H1 (cell line): ENCODE measurements at regions of chr14 and their contacts with region 1.

Region 1: DNA sequence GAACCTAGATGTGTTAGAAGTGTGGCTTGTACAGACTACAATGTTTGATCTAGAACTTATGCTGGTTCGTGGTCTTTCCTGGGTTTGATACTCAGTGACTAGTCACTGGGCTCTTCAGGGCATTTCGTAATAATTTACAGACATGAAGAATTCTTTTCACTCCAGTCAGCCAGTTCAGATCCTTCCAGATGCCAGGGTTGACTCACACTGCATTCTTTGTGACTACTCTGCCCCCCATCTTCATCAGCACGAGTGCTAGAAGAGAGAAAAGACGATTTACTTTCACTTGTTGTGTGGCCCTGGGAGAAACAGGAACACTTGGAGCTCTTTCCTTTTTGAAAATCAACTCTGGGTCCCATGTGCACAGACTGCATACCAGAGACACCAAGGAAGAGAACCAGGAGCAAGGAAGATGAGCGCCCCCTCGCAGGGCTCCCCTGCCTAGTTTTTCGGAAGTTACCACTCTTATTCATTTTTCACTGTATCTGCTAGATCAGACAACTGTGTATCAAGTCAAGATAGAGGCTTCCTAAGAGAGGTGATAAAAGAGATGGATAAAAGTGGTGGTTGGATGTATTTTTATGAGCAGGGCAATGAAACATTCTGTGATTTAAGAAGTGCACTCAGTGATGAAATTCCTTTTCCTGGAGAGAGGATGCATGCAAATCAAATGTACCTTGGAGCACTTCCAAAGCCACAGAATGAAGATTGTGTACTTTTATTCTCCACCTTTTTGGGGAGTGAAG is 33.5 kb upstream of the EVL start:
- DNase-seq: no peak
- H3K4me3 ChIP-seq: no peak overlapping the region
- H3K27ac ChIP-seq: no peak overlapping the region
- H3K4me1 ChIP-seq: no peaks in the 10 kb centered on the region
- H3K27me3 ChIP-seq: peaks cover 0 to 2% (median 0%) of the 10 kb centered on the region in 4 experiments; a peak in 2 of 7 replicates
- CTCF ChIP-seq: no peak
- EP300 ChIP-seq: no peak
- POLR2A ChIP-seq: no peak
- RAD21 ChIP-seq: no peak

Region 2: DNA sequence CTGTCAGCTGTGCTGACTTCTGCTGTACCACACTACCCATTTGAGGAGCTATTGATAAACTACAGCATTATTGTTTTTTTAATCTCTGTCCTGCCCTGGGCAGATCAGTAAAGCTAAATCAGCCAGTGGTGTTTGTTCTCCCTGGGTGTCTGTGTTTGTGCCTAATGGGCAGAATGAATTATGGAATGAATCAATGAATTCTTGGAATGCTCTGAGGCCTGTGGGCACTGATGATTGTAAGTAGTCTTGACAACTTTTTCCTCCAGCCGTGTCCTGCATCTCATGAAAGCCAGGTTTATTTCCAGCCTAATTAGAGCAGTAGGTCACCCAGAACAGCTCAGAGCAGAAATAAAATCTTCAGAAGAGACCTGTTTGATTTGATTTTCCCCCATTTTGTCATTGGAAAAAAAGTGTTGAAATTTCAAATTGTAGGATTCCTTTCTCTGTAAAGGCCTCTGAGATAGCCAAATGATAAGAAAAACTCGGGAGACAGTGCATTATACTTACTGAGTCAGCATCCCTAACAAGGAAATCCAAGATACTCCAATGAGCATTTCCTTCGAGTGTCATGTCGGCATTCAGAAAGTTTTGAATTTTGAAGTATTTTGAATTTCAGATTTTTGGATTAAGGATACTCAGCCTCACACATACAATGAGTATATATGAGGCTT is 14.1 kb after region 1 on chr14:
- CTCF ChIA-PET with region 1: interaction called, 16 read pairs
- POLR2A ChIA-PET with region 1: no interaction called
- DNase-seq: no peak
- H3K4me3 ChIP-seq: no peak overlapping the region
- H3K27ac ChIP-seq: no peak overlapping the region
- H3K4me1 ChIP-seq: no peaks in the 10 kb centered on the region
- H3K27me3 ChIP-seq: no peaks in the 10 kb centered on the region
- CTCF ChIP-seq: no peak
- EP300 ChIP-seq: no peak
- POLR2A ChIP-seq: no peak
- RAD21 ChIP-seq: no peak

Region 3: GRCh38 chr14:100132161-100132902 is 100.6 kb after region 1 on chr14:
- CTCF ChIA-PET with region 1: no interaction called
- POLR2A ChIA-PET with region 1: no interaction called
- DNase-seq: no peak
- H3K4me3 ChIP-seq: no peak overlapping the region
- H3K27ac ChIP-seq: no peak overlapping the region
- H3K4me1 ChIP-seq: peaks cover 0 to 8% (median 6%) of the 10 kb centered on the region in 4 experiments; a peak in 4 of 7 replicates
- H3K27me3 ChIP-seq: no peaks in the 10 kb centered on the region
- CTCF ChIP-seq: no peak
- EP300 ChIP-seq: no peak
- POLR2A ChIP-seq: no peak
- RAD21 ChIP-seq: no peak